ENCODE measurements at regions of chr1 and their contacts with region 1.

Region 1: DNA sequence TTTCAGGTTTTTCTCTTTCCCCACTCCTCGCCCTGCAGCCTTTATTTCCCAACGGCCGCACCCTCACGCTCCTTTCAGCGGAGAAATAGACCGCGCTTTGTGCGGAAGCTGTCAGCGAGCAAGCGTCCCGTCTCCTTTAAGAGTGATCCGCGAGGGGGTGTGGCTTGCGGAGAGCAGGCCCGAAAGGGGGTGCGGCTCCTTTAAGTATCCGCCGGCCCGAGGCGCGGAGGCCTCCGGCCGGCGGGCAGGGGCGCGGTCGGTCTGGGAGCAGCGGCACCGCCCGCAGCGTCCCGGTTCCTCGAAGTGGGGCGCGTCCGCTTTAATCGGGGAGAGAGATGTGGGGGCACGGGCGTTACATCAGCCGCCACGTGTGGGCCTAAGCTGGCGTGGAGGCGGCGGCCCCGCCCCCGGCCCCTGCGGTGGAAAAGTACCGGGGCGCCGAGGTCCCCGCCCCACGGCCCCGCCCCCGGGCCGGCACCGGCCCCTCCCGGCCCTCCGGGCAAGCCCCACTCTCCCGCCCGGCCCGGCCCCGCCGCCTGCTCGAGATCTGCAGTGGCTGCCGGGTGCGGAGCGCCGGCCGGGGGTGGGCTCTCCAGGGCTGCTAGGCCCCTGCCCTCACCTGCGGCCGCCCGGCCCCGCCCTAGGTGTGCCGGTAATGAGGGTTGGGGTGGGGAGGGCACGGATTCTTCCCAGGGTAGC is 1.2 kb downstream of the SLC6A9 start:
- DNase-seq: peak; percentile 79 to 90 (median 86)
- H3K4me3 ChIP-seq: peak overlapping the region; percentile 56 to 99 (median 88)
- H3K27ac ChIP-seq: peak overlapping the region; percentile 64 to 99 (median 96)
- H3K27me3 ChIP-seq: no peaks in the 10 kb centered on the region
- CTCF ChIP-seq: peak in 9 of 56 donors; percentile 8 to 33 (median 24)

Region 2: GRCh38 chr1:43227143-43227764 is 802.8 kb before region 1 on chr1:
- intact Hi-C with region 1: loop called in 1 of 2 experiments (anchors 10 kb)
- DNase-seq: peak; percentile 79 to 91 (median 88)
- H3K4me3 ChIP-seq: no peak overlapping the region
- H3K27ac ChIP-seq: peak overlapping the region in 3 of 59 donors; percentile 13 to 49 (median 27)
- H3K27me3 ChIP-seq: no peaks in the 10 kb centered on the region
- CTCF ChIP-seq: peak; percentile 91 to 100 (median 97)

Region 3: GRCh38 chr1:43454266-43455011 is 575.6 kb before region 1 on chr1:
- intact Hi-C with region 1: loop called in 1 of 2 experiments (anchors 10 kb)
- DNase-seq: peak; percentile 49 to 87 (median 79)
- H3K4me3 ChIP-seq: peak overlapping the region; percentile 43 to 78 (median 65)
- H3K27ac ChIP-seq: peak overlapping the region in 58 of 59 donors; percentile 76 to 96 (median 92)
- H3K27me3 ChIP-seq: no peaks in the 10 kb centered on the region
- CTCF ChIP-seq: peak in 8 of 56 donors; percentile 4 to 30 (median 12)

Region 4: GRCh38 chr1:43763497-43763973 is 266.5 kb before region 1 on chr1:
- intact Hi-C with region 1: loop called (anchors 5 to 10 kb)
- DNase-seq: peak in 9 of 10 donors; percentile 47 to 88 (median 61)
- H3K4me3 ChIP-seq: no peak overlapping the region
- H3K27ac ChIP-seq: no peak overlapping the region
- H3K27me3 ChIP-seq: no peaks in the 10 kb centered on the region
- CTCF ChIP-seq: peak; percentile 59 to 91 (median 83)

Region 5: GRCh38 chr1:43946236-43947060 is 83.6 kb before region 1 on chr1 and contains the start of gene IPO13:
- intact Hi-C with region 1: loop called (anchors 5 to 10 kb)
- DNase-seq: peak; percentile 92 to 98 (median 96)
- H3K4me3 ChIP-seq: peak within 1 kb of the TSS; percentile 58 to 99 (median 93)
- H3K27ac ChIP-seq: peak within 1 kb of the TSS; percentile 92 to 100 (median 99)
- H3K27me3 ChIP-seq: no peaks in the 10 kb centered on the region
- CTCF ChIP-seq: peak; percentile 66 to 97 (median 90)
- total RNA-seq, gene IPO13: 48.0 to 243 (median 94.5) TPM

Region 6: GRCh38 chr1:44012941-44013609 is 17.0 kb before region 1 on chr1:
- intact Hi-C with region 1: loop called in 1 of 2 experiments (anchors 2 kb)
- DNase-seq: peak in 2 of 10 donors; percentile 35 to 59
- H3K4me3 ChIP-seq: peak overlapping the region in 4 of 59 donors; percentile 9 to 66 (median 11)
- H3K27ac ChIP-seq: peak overlapping the region; percentile 65 to 98 (median 94)
- H3K27me3 ChIP-seq: no peaks in the 10 kb centered on the region
- CTCF ChIP-seq: no peak

Region 7: DNA sequence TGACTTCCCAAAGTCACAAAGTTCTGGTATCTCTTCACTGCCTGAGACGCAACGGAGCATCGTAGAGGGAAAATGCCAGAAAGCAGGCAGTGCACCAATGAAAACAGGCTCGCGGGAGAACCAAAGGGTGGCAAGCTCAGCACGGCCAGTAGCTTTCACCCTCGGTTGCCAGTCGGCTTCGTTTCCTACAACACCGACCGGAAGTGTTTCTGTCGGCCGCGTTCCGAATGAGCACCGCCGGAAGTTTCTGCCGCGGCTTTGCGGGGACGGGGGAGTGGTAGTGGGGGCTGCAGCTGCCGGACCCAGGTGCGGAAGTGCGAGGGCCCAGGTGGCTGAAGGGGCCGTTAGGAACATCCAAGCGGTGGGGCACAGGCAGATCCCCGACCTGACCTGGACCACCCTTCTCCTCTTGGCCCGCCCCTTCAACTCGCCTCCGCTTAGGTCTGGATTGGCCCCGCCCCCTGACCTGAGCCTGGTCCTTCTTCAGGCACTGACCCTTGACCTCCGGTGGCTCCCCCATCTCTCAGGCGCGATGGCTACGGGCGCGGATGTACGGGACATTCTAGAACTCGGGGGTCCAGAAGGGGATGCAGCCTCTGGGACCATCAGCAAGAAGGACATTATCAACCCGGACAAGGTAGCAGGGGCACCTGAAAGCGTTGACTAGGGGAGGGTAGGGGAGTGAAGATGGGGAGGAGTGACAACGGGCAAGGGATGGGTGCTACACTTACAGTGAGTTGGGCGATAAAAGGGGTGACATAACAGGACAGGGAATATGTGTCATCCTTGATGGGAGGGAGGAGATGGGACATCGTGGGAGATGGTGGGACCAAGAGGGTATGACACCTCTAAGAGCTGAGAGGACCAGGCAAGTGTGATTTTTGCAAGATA is 183.4 kb after region 1 on chr1 and contains the start of gene DMAP1:
- intact Hi-C with region 1: loop called in 1 of 2 experiments (anchors 10 kb)
- DNase-seq: peak; percentile 82 to 94 (median 89)
- H3K4me3 ChIP-seq: peak within 1 kb of the TSS; percentile 56 to 98 (median 91)
- H3K27ac ChIP-seq: peak within 1 kb of the TSS; percentile 28 to 95 (median 88)
- H3K27me3 ChIP-seq: no peaks in the 10 kb centered on the region
- CTCF ChIP-seq: peak in 48 of 56 donors; percentile 9 to 66 (median 41)
- total RNA-seq, gene DMAP1: 46.6 to 81.3 (median 59.7) TPM